Activated CD4-positive, alpha-beta memory T cell treated with anti-CD3 and anti-CD28 coated beads for 36 hours (primary cell): ENCODE measurements at regions of chr17 and their contacts with region 1.

Region 1: GRCh38 chr17:3738562-3739295 is 15.0 kb downstream of the HASPIN start:
- DNase-seq: peak; percentile 87
- H3K4me3 Mint-ChIP-seq: no peak overlapping the region
- H3K27ac Mint-ChIP-seq: peak overlapping the region; percentile 26
- H3K4me1 Mint-ChIP-seq: peaks cover 32% of the 10 kb centered on the region
- H3K27me3 Mint-ChIP-seq: no peaks in the 10 kb centered on the region

Region 2: DNA sequence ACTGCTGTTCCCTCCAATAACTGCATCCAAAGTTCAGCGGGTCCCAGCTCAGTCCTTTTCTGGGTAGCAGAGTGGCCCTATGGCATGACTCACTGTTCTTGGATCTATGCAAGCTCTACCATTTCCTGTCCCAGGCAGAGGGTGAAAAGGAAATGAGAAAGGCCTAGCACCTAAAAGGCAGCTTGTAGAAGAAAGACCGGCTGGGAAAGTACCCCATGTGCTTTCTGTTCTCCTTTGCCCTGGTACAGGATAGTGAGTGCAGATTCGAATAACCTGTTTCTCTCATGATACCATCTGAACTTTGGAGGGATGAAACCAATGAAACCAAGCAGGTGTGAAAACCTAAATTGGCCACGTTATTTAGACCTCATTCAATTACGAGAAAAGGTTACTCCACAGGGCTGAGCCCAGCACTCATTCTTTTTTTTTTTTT is 27.8 kb before region 1 on chr17:
- CTCF ChIA-PET with region 1: interaction called, 12 read pairs
- POLR2A ChIA-PET with region 1: no interaction called
- intact Hi-C with region 1: no loop called
- DNase-seq: peak; percentile 85
- H3K4me3 Mint-ChIP-seq: peak overlapping the region; percentile 49
- H3K27ac Mint-ChIP-seq: peak overlapping the region; percentile 83
- H3K4me1 Mint-ChIP-seq: peaks cover 48% of the 10 kb centered on the region
- H3K27me3 Mint-ChIP-seq: no peaks in the 10 kb centered on the region

Region 3: GRCh38 chr17:3762922-3763776 is 24.4 kb after region 1 on chr17:
- CTCF ChIA-PET with region 1: interaction called, 20 read pairs
- POLR2A ChIA-PET with region 1: interaction called, 16 read pairs
- intact Hi-C with region 1: loop called (anchors 1 kb)
- DNase-seq: peak; percentile 70
- H3K4me3 Mint-ChIP-seq: peak overlapping the region; percentile 14
- H3K27ac Mint-ChIP-seq: peak overlapping the region; percentile 87
- H3K4me1 Mint-ChIP-seq: peaks cover 43% of the 10 kb centered on the region
- H3K27me3 Mint-ChIP-seq: peaks cover 2% of the 10 kb centered on the region

Region 4: GRCh38 chr17:3796110-3796821 is 57.5 kb after region 1 on chr17:
- CTCF ChIA-PET with region 1: interaction called, 33 read pairs
- POLR2A ChIA-PET with region 1: no interaction called
- intact Hi-C with region 1: loop called (anchors 2 kb)
- DNase-seq: peak; percentile 88
- H3K4me3 Mint-ChIP-seq: no peak overlapping the region
- H3K27ac Mint-ChIP-seq: no peak overlapping the region
- H3K4me1 Mint-ChIP-seq: peaks cover 34% of the 10 kb centered on the region
- H3K27me3 Mint-ChIP-seq: no peaks in the 10 kb centered on the region

Region 5: DNA sequence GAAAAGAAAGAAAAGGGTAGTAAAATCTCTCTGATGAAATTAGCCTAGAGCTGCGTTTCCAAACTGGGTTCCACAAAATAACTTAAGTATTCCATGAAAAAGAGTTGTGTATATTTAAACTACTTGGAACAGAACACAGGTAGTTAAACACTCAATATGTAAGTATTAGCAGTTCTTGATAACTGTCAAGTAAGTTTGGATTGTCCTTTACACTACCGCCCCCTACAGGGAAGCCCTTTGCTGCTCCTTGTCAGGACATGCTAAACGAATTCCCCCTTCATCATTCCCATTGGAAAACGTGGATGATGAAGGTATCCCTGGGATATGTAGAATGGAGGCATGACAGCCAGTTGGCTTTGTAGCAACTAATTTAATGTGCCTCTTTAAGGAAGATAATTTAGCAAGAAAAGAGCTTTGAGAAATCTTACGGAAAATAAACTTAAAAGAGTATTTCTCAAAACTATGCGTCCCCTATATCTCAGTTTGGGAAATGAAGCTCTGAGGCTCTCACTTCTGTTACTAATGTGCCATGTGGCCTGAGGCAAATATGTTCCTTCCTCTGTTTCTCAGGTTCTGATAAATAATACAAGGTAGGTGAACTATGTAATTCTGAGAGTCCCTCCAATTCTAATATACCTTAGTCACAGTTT is 88.5 kb after region 1 on chr17:
- CTCF ChIA-PET with region 1: interaction called, 402 read pairs
- POLR2A ChIA-PET with region 1: interaction called, 9 read pairs
- intact Hi-C with region 1: loop called (anchors 1 kb)
- DNase-seq: peak; percentile 72
- H3K4me3 Mint-ChIP-seq: no peak overlapping the region
- H3K27ac Mint-ChIP-seq: no peak overlapping the region
- H3K4me1 Mint-ChIP-seq: no peaks in the 10 kb centered on the region
- H3K27me3 Mint-ChIP-seq: no peaks in the 10 kb centered on the region

Region 6: DNA sequence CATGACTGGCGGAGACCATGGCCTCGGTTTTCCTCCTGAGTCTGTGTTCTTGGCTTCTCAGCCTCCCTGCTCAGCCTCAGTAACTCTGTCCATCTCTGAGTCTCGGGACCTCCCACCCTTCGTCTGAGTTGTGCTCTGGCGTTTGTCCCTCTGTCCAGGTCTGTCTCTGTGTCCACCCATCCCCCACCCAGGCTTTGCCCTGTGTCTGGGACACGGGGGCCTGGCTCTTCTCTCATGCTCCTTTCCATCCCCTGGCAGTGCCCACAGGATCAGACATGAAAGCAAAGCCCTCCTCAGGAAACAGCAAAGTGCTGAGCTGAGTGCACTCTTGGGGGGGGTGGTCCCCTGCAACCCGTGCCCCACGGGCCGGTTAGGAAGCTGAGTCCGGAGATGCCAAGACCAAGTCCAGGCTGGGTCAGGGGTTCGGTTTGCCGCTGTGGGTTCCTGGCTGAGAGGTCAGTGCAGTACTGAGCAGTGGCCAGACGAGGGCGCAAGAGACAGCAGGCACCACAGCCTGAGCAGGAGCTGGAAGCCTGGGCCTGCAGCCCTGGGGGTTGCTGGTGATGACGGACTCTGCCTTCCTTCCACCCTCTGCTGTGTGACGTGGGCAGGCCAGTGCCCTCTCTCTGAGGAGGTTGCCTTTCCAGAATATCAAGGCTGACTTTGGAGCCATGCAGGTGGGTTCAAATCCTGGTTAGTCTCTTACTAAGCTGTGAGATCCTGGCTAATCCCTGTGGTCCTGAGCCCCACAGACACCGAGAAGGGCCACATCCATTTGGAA is 175.0 kb after region 1 on chr17:
- CTCF ChIA-PET with region 1: interaction called, 9 read pairs
- POLR2A ChIA-PET with region 1: no interaction called
- intact Hi-C with region 1: loop called (anchors 5 kb)
- DNase-seq: peak; percentile 89
- H3K4me3 Mint-ChIP-seq: no peak overlapping the region
- H3K27ac Mint-ChIP-seq: peak overlapping the region; percentile 54
- H3K4me1 Mint-ChIP-seq: peaks cover 39% of the 10 kb centered on the region
- H3K27me3 Mint-ChIP-seq: no peaks in the 10 kb centered on the region